ENCODE measurements at regions of chr1 and their contacts with region 1.

Region 1: DNA sequence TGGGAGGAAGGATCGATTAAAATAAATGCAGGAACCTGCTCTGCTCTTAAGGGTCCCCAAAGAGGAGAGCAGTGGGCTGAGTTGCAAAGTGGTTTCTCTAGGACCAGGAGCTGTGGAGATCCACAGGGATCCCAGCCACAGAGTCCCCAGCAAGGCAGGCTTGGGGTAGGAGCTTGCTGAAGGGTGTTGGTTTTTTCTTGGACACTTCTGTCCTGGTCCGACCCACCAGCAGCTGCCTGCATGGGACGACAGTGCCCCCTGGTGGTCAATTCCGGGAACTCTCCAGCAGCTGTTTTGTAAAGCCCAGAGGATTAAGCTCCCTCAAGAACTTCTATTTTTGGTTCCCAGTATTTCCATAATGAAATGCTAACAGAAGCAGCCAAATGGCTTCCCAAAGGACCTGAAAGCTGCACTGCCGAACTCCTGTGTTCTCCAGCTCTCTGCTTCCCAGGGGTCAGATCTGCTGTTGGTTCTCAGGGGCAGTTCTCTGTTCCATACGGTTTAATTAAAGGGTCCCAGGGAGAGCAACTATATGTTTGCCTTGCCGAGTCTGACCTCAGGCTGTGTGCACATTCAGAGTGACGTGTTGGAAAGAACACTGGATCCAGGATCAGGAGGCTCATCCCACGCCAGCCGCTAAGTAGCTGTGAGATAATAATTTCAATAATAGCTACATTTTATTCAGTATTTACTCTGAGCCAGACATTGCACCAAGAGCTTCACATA is 23.2 kb downstream of the NENF start:
- DNase-seq: peak; percentile 91
- ATAC-seq: peak; percentile 74 to 87 (median 80)
- H3K4me3 ChIP-seq: peak overlapping the region in 2 of 10 donors; percentile 18 to 25
- H3K27ac ChIP-seq: peak overlapping the region in 9 of 10 donors; percentile 11 to 79 (median 55)
- H3K4me1 ChIP-seq: peaks cover 22 to 43% (median 30%) of the 10 kb centered on the region in 9 donors
- H3K27me3 ChIP-seq: no peaks in the 10 kb centered on the region
- CTCF ChIP-seq: peak; percentile 94 to 100 (median 99)

Region 2: GRCh38 chr1:211675230-211676105 is 780.5 kb before region 1 on chr1 and contains the start of gene NEK2:
- intact Hi-C with region 1: loop called in 6 of 10 experiments (anchors 5 to 10 kb)
- DNase-seq: peak; percentile 83 to 90
- ATAC-seq: peak; percentile 96 to 99 (median 98)
- H3K4me3 ChIP-seq: peak within 1 kb of the TSS; percentile 34 to 71 (median 58)
- H3K27ac ChIP-seq: peak within 1 kb of the TSS in 1 of 10 donors; percentile 22
- H3K4me1 ChIP-seq: peaks cover 0 to 18% (median 8%) of the 10 kb centered on the region in 9 donors
- H3K27me3 ChIP-seq: no peaks in the 10 kb centered on the region
- CTCF ChIP-seq: no peak
- total RNA-seq, gene NEK2: 0.12 to 2.1 (median 0.23) TPM in 5 of 10 donors, not detected in the others

Region 3: GRCh38 chr1:212012034-212012740 is 443.8 kb before region 1 on chr1:
- intact Hi-C with region 1: loop called in 1 of 10 experiments (anchors 2 kb)
- DNase-seq: peak; percentile 32 to 58
- ATAC-seq: peak; percentile 63 to 89 (median 82)
- H3K4me3 ChIP-seq: no peak overlapping the region
- H3K27ac ChIP-seq: no peak overlapping the region
- H3K4me1 ChIP-seq: peaks cover 0 to 3% (median 0%) of the 10 kb centered on the region in 9 donors
- H3K27me3 ChIP-seq: no peaks in the 10 kb centered on the region
- CTCF ChIP-seq: peak; percentile 71 to 96 (median 89)

Region 4: DNA sequence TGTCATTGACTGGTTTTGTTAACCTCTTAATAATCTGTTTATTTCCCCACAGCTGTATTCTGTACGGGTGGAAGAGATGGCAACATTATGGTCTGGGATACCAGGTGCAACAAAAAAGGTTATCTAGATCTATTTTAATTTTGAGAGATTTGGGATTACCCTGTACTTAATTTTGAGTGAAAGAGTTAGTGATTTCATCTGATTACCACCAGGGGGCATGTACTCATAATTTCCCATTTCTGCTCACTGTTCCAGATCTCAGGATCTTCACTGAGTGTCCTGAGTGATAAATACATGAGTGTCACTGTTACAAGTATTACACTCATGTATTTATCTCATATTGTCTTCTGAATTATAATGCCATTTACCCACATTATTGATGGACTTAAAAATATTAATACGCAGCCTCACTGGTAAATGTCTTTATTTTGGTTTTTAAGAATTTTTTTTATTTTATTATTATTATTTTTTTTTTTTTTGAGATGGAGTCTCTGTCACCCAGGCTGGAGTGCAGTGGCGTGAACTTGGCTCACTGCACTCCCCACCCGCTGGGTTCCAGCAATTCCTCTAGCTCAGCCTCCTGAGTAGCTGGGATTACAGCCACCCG is 393.0 kb before region 1 on chr1:
- intact Hi-C with region 1: loop called in 4 of 10 experiments (anchors 2 to 5 kb)
- DNase-seq: no peak
- ATAC-seq: peak in 3 of 8 donors; percentile 29 to 55 (median 31)
- H3K4me3 ChIP-seq: no peak overlapping the region
- H3K27ac ChIP-seq: no peak overlapping the region
- H3K4me1 ChIP-seq: peaks cover 0 to 12% (median 0%) of the 10 kb centered on the region in 9 donors
- H3K27me3 ChIP-seq: no peaks in the 10 kb centered on the region
- CTCF ChIP-seq: peak; percentile 53 to 80 (median 72)

Region 5: DNA sequence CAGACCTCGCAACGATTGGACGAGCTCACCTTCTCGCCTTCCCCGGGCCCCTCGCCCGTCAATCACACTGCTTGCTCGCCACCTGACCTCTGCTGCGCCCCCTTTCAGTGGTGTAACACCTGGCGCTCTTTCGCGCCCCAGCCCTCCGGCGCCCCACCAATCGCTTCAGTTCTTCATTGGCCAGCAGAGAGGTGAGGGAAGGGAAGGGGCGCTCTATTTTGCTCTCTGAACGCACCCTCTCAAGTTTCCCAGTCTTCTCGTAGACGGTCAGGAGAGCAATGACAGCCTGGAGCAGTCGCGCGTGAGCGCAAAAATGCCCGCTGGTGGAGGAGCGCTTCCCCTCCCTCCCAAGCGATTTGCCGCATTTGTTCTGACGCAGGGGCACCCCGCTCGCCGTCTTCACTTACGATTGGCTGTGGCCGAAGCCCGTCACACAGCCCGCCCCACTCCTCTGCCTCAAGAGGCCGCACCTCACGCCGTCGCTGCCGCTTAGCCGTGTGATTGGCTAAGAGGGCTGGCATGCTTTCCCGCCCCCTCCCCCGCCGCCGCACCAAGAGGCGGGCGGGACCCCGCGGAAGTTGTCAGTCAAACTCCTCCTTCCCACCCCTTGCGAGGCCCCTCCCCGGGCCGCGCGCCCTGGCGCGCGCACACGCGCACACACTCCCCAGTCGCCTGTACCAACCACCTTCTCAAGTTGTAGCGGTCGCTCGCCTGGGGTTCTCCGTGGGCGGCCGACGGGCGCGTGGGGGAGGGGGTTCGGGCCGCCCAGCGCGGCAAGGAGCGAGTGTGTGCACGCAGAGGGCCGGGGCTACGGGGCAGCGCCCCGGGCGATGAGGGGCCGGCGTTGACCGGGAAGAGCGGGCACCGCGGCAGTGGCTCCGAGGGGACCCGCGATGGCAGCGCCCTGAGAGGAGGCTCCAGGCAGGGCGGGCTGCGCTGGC is 171.0 kb before region 1 on chr1 and contains the start of gene PPP2R5A:
- intact Hi-C with region 1: loop called in 6 of 10 experiments (anchors 5 to 10 kb)
- DNase-seq: peak; percentile 99
- ATAC-seq: peak; percentile 95 to 98 (median 98)
- H3K4me3 ChIP-seq: peak within 1 kb of the TSS; percentile 75 to 95 (median 91)
- H3K27ac ChIP-seq: peak within 1 kb of the TSS; percentile 96 to 99 (median 98)
- H3K4me1 ChIP-seq: peaks cover 0 to 46% (median 32%) of the 10 kb centered on the region in 9 donors
- H3K27me3 ChIP-seq: no peaks in the 10 kb centered on the region
- CTCF ChIP-seq: peak in 7 of 9 donors; percentile 6 to 52 (median 33)
- total RNA-seq, gene PPP2R5A: 48.6 to 86.8 (median 57.3) TPM

Region 6: GRCh38 chr1:212368073-212368484 is 87.9 kb before region 1 on chr1:
- intact Hi-C with region 1: loop called in 8 of 10 experiments (anchors 2 to 10 kb)
- DNase-seq: peak in 1 of 2 donors; percentile 58
- ATAC-seq: peak; percentile 72 to 88 (median 85)
- H3K4me3 ChIP-seq: no peak overlapping the region
- H3K27ac ChIP-seq: no peak overlapping the region
- H3K4me1 ChIP-seq: peaks cover 0 to 30% (median 11%) of the 10 kb centered on the region in 9 donors
- H3K27me3 ChIP-seq: no peaks in the 10 kb centered on the region
- CTCF ChIP-seq: peak; percentile 60 to 90 (median 85)

Region 7: GRCh38 chr1:212414328-212415106 is 41.4 kb before region 1 on chr1 and contains the start of gene PACC1:
- intact Hi-C with region 1: no loop called
- DNase-seq: peak; percentile 87 to 90
- ATAC-seq: peak; percentile 95 to 98 (median 97)
- H3K4me3 ChIP-seq: peak within 1 kb of the TSS; percentile 70 to 96 (median 86)
- H3K27ac ChIP-seq: peak within 1 kb of the TSS in 8 of 10 donors; percentile 13 to 81 (median 40)
- H3K4me1 ChIP-seq: peaks cover 0 to 50% (median 7%) of the 10 kb centered on the region in 9 donors
- H3K27me3 ChIP-seq: no peaks in the 10 kb centered on the region
- CTCF ChIP-seq: peak in 2 of 9 donors; percentile 14 to 15
- total RNA-seq, gene PACC1: 1.9 to 4.6 (median 2.4) TPM

Region 8: DNA sequence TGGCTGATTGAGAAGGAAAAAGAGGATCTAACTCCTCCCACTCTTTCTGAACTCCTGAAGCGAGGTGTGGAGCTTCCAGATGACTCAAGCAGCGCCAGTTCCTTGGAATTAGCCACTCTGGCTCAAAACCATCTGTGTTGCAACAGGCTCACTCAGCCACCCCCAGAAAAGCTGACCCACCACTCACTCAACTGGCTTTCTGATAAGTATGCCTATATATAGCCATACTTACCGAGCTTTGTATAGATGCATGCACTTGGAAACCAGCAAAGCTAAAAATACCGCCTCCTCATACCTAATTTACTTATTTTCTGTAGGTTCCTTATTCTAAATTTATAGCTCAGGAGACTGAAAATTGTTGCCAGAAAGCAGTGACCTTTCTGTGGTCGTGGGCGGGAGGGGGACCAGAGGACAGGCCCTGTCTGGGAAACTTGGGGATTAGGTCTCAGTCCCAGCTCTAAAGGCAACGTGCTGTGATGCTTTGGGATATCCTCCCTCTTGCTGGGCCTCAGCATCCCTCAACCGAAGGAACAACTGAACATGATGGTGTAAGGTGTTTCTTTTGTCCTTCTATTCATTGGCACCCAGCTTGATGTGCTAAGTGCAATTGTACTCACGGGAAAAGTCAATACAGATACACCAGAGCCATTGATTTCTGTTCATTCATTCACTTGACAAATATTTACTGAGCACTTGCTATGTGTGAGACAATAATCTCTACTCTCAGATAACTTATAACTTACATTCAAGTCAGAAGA is 42.5 kb after region 1 on chr1:
- intact Hi-C with region 1: no loop called
- DNase-seq: no peak
- ATAC-seq: peak in 1 of 8 donors; percentile 46
- H3K4me3 ChIP-seq: no peak overlapping the region
- H3K27ac ChIP-seq: no peak overlapping the region
- H3K4me1 ChIP-seq: peaks cover 0 to 20% (median 0%) of the 10 kb centered on the region in 9 donors
- H3K27me3 ChIP-seq: no peaks in the 10 kb centered on the region
- CTCF ChIP-seq: no peak